Heart right ventricle (tissue), 16 donors: ENCODE measurements at regions of chr17 and their contacts with region 1.

Region 1: DNA sequence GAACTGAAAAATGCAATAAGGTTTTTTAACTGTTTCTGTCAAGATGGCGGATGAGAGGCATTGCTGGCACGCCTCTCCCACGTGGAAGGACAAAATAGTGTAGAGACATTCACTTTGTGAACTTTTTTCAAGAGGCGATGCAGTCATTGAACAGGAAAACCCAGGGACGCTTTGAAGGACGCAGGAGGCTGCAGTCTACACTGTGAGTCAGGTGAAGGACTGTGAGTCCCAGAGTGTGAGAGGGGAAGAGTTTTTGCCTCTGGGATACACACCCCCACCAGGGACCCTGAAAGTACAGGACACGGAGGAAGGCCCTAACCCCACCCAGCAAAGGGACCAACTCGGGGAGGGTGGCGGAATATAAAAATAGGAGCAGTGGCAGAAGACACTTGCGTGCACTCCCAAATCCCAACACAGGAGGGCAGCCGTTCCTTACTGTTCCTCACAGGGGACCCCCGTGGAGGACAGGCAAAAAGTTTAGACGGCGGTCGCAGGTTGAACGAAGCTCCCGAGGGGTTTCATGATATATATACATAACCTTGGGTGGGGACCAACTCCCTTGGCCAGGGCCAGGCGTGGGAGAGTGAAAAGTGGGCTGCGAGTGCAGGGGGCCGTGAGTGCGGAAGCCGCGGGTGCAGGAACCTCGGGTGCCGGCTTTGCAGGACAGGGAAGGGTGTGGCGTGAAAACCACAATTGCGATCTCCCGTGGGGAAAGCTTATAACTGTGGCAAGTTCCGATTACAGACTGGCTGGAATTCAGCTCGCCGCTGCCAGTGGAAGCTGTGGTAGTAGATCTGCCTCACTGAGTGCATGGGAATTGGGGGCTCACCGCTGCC is 82.0 kb upstream of the ALOX12 start:
- DNase-seq: peak; percentile 80 to 84
- ATAC-seq: peak; percentile 78 to 95 (median 84)
- H3K4me3 ChIP-seq: peak overlapping the region in 7 of 10 donors; percentile 24 to 53 (median 44)
- H3K27ac ChIP-seq: no peak overlapping the region
- H3K4me1 ChIP-seq: peaks cover 0 to 22% (median 9%) of the 10 kb centered on the region in 9 donors
- H3K27me3 ChIP-seq: peaks cover 0 to 12% (median 5%) of the 10 kb centered on the region in 7 donors
- CTCF ChIP-seq: peak; percentile 77 to 94 (median 87)

Region 2: GRCh38 chr17:6651357-6651918 is 262.4 kb before region 1 on chr17 and contains the starts of genes C17orf100 and MED31:
- intact Hi-C with region 1: no loop called
- DNase-seq: peak; percentile 95 to 97
- ATAC-seq: peak; percentile 99 to 100 (median 99)
- H3K4me3 ChIP-seq: peak within 1 kb of the TSS; percentile 54 to 93 (median 72)
- H3K27ac ChIP-seq: peak within 1 kb of the TSS; percentile 32 to 93 (median 74)
- H3K4me1 ChIP-seq: peaks cover 8 to 65% (median 40%) of the 10 kb centered on the region in 9 donors
- H3K27me3 ChIP-seq: peaks cover 0 to 45% (median 24%) of the 10 kb centered on the region in 7 donors
- CTCF ChIP-seq: no peak
- total RNA-seq, gene C17orf100: 0.30 to 1.2 (median 0.57) TPM in 9 of 10 donors, not detected in the other
- total RNA-seq, gene MED31: 8.4 to 17.5 (median 14.2) TPM

Region 3: GRCh38 chr17:6995431-6996255 is 81.8 kb after region 1 on chr17 and contains the start of gene ALOX12:
- intact Hi-C with region 1: loop called in 3 of 10 experiments (anchors 2 to 5 kb)
- DNase-seq: no peak
- ATAC-seq: peak; percentile 38 to 67 (median 63)
- H3K4me3 ChIP-seq: peak within 1 kb of the TSS in 9 of 10 donors; percentile 21 to 45 (median 41)
- H3K27ac ChIP-seq: no peak within 1 kb of the TSS
- H3K4me1 ChIP-seq: peaks cover 0 to 17% (median 8%) of the 10 kb centered on the region in 9 donors
- H3K27me3 ChIP-seq: peaks cover 0 to 4% (median 0%) of the 10 kb centered on the region in 7 donors
- CTCF ChIP-seq: no peak
- total RNA-seq, gene ALOX12: 0.11 TPM in 1 of 10 donors, not detected in the others

Region 4: DNA sequence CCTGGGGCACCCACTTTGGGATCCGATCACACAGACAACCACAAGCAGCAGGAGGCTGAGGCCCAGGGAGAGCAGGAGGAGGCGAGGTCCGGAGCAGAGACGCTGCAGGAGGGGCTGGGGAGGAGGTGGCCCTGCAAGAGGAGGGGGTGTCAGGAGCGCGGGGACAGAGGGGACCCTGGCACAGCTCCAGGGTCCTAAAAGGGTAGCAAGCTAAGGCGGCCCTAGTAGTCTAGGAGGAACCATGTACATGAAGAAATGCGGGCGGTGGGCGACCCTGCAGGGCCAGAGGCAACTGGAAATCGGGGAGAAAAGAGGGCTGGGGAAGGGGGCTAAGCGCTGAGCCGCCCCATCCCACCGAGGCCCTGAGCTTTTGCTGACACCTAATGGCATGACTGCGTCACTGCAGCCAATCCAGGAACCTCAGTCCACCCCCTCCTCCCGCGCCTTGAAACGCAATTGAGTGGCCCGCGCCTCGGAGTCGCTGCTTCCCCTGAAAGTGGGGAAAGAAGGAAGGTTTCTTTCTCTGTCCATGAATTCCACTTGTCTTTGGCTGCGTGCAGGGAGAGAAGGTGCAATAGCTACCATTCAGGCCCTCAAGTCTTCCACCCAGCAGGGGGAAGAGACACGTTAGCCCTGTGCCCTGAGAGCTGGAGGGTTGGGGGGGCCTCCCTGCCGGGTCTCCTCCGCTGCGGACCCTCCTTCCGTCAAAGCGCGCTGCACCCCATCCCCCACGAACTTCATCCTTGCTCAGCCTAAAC is 263.5 kb after region 1 on chr17:
- intact Hi-C with region 1: loop called in 1 of 10 experiments (anchors 10 kb)
- DNase-seq: peak; percentile 50 to 65
- ATAC-seq: peak; percentile 66 to 90 (median 82)
- H3K4me3 ChIP-seq: peak overlapping the region in 9 of 10 donors; percentile 14 to 59 (median 44)
- H3K27ac ChIP-seq: peak overlapping the region in 1 of 10 donors; percentile 37
- H3K4me1 ChIP-seq: peaks cover 0 to 27% (median 16%) of the 10 kb centered on the region in 9 donors
- H3K27me3 ChIP-seq: peaks cover 0 to 37% (median 24%) of the 10 kb centered on the region in 7 donors
- CTCF ChIP-seq: peak; percentile 77 to 93 (median 89)